ENCODE measurements at regions of chr16 and their contacts with region 1.

Region 1: DNA sequence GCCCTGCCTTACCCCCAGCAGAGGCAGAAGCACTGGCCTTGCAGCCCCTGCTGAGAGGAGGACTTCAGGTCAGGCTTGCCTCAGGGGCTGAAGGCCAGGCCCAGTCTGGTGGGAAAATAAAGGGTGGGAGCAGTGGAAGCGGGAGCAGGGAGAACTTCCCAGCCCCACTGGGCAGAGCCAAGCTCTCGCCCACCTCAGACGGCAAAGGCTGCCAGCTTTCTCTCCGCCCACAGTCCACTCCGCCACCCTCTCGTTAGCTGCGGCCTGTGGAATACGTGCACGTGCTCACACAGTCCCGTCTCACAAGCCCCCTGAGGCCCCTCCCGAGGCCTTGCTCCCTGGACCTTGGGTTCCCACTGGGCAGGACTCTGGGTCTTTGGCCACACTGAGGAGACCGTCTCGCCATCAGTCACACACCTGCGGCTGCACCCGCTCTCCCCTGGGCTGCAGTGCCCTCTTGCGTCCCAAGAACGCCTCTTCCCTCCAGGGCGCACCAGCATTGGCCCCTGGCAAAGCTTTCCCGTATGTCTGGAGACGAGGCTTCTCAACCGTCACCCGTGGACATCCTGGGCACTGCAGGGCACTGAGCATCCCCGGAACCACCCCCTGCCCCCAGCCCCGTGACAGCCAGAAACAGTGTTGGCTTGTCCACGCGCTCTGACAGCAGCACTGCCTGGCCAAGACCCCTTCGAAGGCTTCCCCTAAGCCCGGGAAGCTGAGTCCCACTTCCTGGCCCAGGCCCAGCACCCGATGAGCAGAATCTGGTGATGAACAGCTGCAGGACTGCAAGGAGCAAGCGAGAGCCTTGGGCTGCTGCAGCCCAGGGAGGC is 8.3 kb downstream of the MRPL28 start:
- DNase-seq: peak; percentile 82 to 84
- H3K4me3 ChIP-seq: no peak overlapping the region
- H3K4me3 Mint-ChIP-seq: no peak overlapping the region
- H3K27ac Mint-ChIP-seq: no peak overlapping the region
- H3K4me1 ChIP-seq: no peaks in the 10 kb centered on the region
- H3K4me1 Mint-ChIP-seq: no peaks in the 10 kb centered on the region
- H3K27me3 ChIP-seq: no peaks in the 10 kb centered on the region
- H3K27me3 Mint-ChIP-seq: no peaks in the 10 kb centered on the region
- CTCF ChIP-seq: peak; percentile 73 to 91

Region 2: DNA sequence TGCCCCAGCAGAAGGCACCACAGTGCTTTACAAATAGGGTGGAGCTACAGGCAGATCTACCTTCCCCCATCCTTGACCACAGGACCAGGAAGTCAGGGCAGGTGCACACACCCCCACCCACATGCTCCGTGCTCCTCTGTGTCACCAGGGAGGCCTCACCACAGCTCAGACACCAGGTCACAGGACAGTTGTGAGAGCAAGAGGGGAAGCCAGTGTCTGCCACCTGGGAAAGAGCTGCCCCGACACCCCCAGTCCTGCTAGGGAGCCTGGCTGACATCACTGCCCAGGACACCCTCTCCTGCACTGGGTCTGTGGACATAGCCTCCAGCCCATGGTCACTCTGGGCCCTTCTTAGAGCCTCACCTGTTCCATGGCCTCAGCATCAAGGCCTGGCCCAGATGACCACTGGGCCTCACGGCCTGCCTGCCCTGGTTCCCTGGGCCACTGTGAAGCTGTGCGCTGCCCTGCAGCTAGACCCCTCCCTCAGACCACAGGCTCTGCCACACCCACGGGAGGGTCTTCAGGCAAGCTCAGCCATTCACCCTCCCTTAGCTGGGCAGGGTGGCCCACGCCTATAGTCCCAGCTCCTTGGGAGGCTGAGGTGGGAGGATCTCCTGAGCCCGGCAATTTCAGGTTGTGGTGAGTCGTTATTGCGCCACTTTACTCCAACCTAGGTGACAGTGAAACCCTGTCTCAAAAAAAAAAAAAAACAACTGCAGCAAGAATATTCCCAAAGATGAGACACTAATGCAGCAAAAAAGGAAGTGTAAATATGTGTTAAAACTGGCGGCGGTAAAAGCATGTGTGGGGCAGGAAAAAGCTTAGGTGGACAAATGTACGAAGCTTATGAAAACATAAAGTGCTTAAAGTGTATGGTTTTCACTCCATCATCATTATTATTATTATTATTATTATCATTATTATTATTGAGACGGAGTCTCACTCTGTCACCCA is 322.9 kb before region 1 on chr16:
- CTCF ChIA-PET with region 1: no interaction called
- POLR2A ChIA-PET with region 1: interaction called, 10 read pairs
- intact Hi-C with region 1: no loop called
- DNase-seq: no peak
- H3K4me3 ChIP-seq: no peak overlapping the region
- H3K4me3 Mint-ChIP-seq: no peak overlapping the region
- H3K27ac Mint-ChIP-seq: no peak overlapping the region
- H3K4me1 ChIP-seq: no peaks in the 10 kb centered on the region
- H3K4me1 Mint-ChIP-seq: no peaks in the 10 kb centered on the region
- H3K27me3 ChIP-seq: no peaks in the 10 kb centered on the region
- H3K27me3 Mint-ChIP-seq: no peaks in the 10 kb centered on the region
- CTCF ChIP-seq: no peak

Region 3: DNA sequence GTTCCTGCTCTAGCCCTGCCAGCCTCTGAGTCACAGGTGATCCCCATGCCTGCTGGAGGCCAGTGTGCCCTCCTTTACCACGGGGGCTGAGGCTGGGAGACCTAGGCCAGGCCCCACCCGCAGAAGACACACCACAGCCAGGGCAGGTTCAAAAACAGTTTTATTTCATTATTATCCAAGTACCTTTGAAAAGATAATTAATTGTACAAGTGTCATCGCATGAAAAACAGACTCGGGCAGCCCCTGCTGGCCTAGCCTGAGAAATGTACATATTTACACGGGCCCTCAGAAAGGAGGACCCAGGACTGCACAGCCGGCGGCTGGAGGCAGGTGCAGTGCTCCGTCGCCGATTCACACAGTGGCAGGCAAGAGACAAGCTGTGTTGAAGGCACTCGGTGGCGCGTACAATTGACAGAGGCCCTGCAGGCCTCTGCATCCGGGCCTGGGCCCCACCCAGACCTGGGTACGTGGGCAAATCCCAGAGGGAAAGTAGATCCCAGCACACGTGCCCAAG is 74.7 kb before region 1 on chr16:
- CTCF ChIA-PET with region 1: no interaction called
- POLR2A ChIA-PET with region 1: no interaction called
- intact Hi-C with region 1: no loop called
- DNase-seq: no peak
- H3K4me3 ChIP-seq: no peak overlapping the region
- H3K4me3 Mint-ChIP-seq: no peak overlapping the region
- H3K27ac Mint-ChIP-seq: no peak overlapping the region
- H3K4me1 ChIP-seq: no peaks in the 10 kb centered on the region
- H3K4me1 Mint-ChIP-seq: no peaks in the 10 kb centered on the region
- H3K27me3 ChIP-seq: no peaks in the 10 kb centered on the region
- H3K27me3 Mint-ChIP-seq: no peaks in the 10 kb centered on the region
- CTCF ChIP-seq: no peak

Region 4: GRCh38 chr16:303760-304505 is 58.2 kb before region 1 on chr16:
- CTCF ChIA-PET with region 1: no interaction called
- POLR2A ChIA-PET with region 1: no interaction called
- intact Hi-C with region 1: loop called (anchors 1 kb)
- DNase-seq: peak in 1 of 2 experiments; percentile 36
- H3K4me3 ChIP-seq: no peak overlapping the region
- H3K4me3 Mint-ChIP-seq: no peak overlapping the region
- H3K27ac Mint-ChIP-seq: no peak overlapping the region
- H3K4me1 ChIP-seq: no peaks in the 10 kb centered on the region
- H3K4me1 Mint-ChIP-seq: no peaks in the 10 kb centered on the region
- H3K27me3 ChIP-seq: no peaks in the 10 kb centered on the region
- H3K27me3 Mint-ChIP-seq: no peaks in the 10 kb centered on the region
- CTCF ChIP-seq: peak in 1 of 2 experiments; percentile 33

Region 5: GRCh38 chr16:1054660-1055556 is 692.8 kb after region 1 on chr16:
- CTCF ChIA-PET with region 1: no interaction called
- POLR2A ChIA-PET with region 1: no interaction called
- intact Hi-C with region 1: no loop called
- DNase-seq: peak; percentile 53 to 71
- H3K4me3 ChIP-seq: no peak overlapping the region
- H3K4me3 Mint-ChIP-seq: no peak overlapping the region
- H3K27ac Mint-ChIP-seq: no peak overlapping the region
- H3K4me1 ChIP-seq: no peaks in the 10 kb centered on the region
- H3K4me1 Mint-ChIP-seq: no peaks in the 10 kb centered on the region
- H3K27me3 ChIP-seq: no peaks in the 10 kb centered on the region
- H3K27me3 Mint-ChIP-seq: no peaks in the 10 kb centered on the region
- CTCF ChIP-seq: peak; percentile 79 to 86